Activated CD8-positive, alpha-beta T cell treated with anti-CD3 and anti-CD28 coated beads, Interleukin-2, amount 10 ng/mL, durations not matched to agents 7 days and 5 days (primary cell): ENCODE measurements at regions of chr9 and their contacts with region 1.

Region 1: GRCh38 chr9:19174127-19174912 is 47.0 kb upstream of the PLIN2 start:
- DNase-seq: peak; percentile 52
- ATAC-seq: peak; percentile 87
- H3K4me3 Mint-ChIP-seq: no peak overlapping the region
- H3K27ac Mint-ChIP-seq: peak overlapping the region; percentile 57
- H3K4me1 Mint-ChIP-seq: peaks cover 36% of the 10 kb centered on the region
- H3K27me3 Mint-ChIP-seq: no peaks in the 10 kb centered on the region

Region 2: DNA sequence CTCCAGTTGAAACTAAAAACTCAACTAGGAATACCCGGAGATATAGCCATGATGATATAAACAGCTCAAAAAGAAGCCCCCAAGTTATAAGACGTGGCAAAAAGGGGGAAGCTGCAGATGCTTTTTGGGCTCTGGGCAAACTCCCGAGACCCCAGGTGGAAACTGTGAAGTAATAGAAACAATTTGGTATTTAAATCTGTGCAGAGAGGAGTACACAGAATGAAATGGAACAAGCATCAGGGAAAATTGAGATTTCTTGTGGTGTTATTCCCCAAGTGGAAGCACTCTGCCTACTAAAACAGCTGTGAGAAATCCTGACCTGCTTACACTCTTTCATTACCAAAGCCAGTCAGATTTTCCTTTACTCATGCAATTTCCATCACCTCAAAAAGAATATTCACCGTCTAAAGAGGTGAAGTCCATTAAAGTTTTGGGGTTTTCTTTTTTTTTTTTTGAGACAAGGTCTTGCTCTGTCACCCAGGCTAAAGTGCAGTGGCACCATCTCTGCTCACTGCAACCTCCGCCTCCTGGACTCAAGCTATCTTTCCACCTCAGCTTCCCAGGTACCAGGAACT is 164.8 kb before region 1 on chr9:
- CTCF ChIA-PET with region 1: no interaction called
- POLR2A ChIA-PET with region 1: no interaction called
- DNase-seq: no peak
- ATAC-seq: no peak
- H3K4me3 Mint-ChIP-seq: no peak overlapping the region
- H3K27ac Mint-ChIP-seq: no peak overlapping the region
- H3K4me1 Mint-ChIP-seq: no peaks in the 10 kb centered on the region
- H3K27me3 Mint-ChIP-seq: peaks cover 5% of the 10 kb centered on the region

Region 3: DNA sequence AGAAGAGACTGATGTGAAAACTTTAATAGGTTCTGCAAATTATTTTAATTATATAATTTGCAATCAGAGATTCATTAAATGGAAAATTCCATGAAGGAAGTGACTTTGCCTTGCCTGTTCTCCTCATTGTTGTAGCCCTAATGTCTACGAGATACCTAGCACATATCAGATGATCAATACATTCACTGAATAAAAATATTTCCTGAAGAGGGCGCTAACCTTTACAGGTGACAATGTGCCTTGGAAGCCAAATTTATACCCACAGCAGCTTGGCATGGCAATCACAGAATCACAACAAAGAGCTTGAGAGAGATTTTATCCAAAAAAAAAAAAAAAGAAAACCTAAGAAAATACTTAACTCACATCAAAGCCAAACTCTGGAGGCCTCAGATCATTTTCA is 89.0 kb before region 1 on chr9:
- CTCF ChIA-PET with region 1: interaction called, 41 read pairs
- POLR2A ChIA-PET with region 1: interaction called, 3 read pairs
- DNase-seq: no peak
- ATAC-seq: peak; percentile 80
- H3K4me3 Mint-ChIP-seq: no peak overlapping the region
- H3K27ac Mint-ChIP-seq: no peak overlapping the region
- H3K4me1 Mint-ChIP-seq: no peaks in the 10 kb centered on the region
- H3K27me3 Mint-ChIP-seq: no peaks in the 10 kb centered on the region

Region 4: DNA sequence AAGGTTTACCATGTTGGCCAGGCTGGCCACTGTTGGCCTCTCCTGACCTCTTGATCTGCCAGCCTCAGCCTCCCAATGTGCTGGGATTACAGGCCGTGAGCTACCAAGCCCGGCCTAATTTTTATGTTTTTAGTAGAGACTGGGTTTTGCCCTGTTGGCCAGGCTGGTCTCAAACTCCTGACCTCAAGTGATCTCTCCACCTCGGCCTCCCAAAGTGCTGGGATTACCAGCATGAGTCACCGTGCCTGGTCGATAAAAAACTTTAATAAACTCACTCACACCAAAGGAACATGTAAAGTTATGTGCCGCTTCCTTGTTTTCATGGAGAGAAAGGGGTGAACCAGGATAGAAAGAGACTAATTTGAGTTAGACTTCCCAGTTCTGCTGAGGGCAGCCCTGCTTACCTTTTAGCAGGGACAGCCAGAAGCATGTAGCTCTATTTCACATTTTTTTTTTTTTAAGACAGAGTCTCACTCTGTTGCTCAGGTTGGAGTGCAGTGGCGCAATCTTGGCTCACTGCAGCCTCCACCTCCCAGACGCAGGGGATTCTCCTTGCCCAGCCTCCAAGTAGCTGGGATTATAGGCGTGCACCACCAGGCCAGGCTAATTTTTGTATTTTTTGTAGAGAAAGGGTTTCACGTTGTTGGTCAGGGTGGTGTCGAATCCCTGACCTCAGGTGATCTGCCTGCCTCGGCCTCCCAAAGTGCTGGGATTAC is 60.2 kb before region 1 on chr9:
- CTCF ChIA-PET with region 1: interaction called, 10 read pairs
- POLR2A ChIA-PET with region 1: no interaction called
- DNase-seq: no peak
- ATAC-seq: no peak
- H3K4me3 Mint-ChIP-seq: no peak overlapping the region
- H3K27ac Mint-ChIP-seq: no peak overlapping the region
- H3K4me1 Mint-ChIP-seq: no peaks in the 10 kb centered on the region
- H3K27me3 Mint-ChIP-seq: no peaks in the 10 kb centered on the region

Region 5: GRCh38 chr9:19127881-19128500 is 46.3 kb before region 1 on chr9:
- CTCF ChIA-PET with region 1: interaction called, 25 read pairs
- POLR2A ChIA-PET with region 1: no interaction called
- DNase-seq: peak; percentile 50
- ATAC-seq: peak; percentile 26
- H3K4me3 Mint-ChIP-seq: peak overlapping the region; percentile 94
- H3K27ac Mint-ChIP-seq: peak overlapping the region; percentile 97
- H3K4me1 Mint-ChIP-seq: peaks cover 56% of the 10 kb centered on the region
- H3K27me3 Mint-ChIP-seq: no peaks in the 10 kb centered on the region

Region 6: DNA sequence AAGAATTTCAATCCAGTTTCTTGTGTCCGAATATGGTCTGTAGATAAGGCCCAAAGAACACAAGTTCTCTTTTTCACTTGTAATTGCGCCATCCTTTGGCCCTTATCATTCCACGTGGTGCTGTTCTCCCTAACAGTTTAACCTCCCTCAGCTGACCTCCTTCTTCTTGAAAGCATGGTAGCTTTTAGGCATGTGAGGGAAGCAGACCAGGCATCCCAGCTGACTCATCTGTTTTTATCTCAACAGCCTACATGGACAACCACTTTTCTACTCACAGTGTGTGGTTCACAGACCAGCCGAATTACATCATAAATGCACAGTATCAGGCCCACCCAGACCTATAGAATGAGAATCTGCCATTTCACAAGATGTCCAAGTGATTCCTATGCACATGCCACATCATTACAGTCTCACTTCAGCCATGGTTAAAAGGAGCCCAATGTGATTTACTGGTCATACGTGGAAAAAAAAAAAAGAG is 20.1 kb before region 1 on chr9:
- CTCF ChIA-PET with region 1: interaction called, 21 read pairs
- POLR2A ChIA-PET with region 1: no interaction called
- DNase-seq: no peak
- ATAC-seq: no peak
- H3K4me3 Mint-ChIP-seq: no peak overlapping the region
- H3K27ac Mint-ChIP-seq: no peak overlapping the region
- H3K4me1 Mint-ChIP-seq: peaks cover 14% of the 10 kb centered on the region
- H3K27me3 Mint-ChIP-seq: no peaks in the 10 kb centered on the region

Region 7: GRCh38 chr9:19184144-19184917 is 10.0 kb after region 1 on chr9:
- CTCF ChIA-PET with region 1: interaction called, 38 read pairs
- POLR2A ChIA-PET with region 1: interaction called, 3 read pairs
- DNase-seq: peak; percentile 90
- ATAC-seq: peak; percentile 100
- H3K4me3 Mint-ChIP-seq: peak overlapping the region; percentile 60
- H3K27ac Mint-ChIP-seq: peak overlapping the region; percentile 94
- H3K4me1 Mint-ChIP-seq: peaks cover 27% of the 10 kb centered on the region
- H3K27me3 Mint-ChIP-seq: no peaks in the 10 kb centered on the region

Region 8: GRCh38 chr9:19208695-19209137 is 34.4 kb after region 1 on chr9:
- CTCF ChIA-PET with region 1: no interaction called
- POLR2A ChIA-PET with region 1: no interaction called
- DNase-seq: no peak
- ATAC-seq: no peak
- H3K4me3 Mint-ChIP-seq: no peak overlapping the region
- H3K27ac Mint-ChIP-seq: no peak overlapping the region
- H3K4me1 Mint-ChIP-seq: no peaks in the 10 kb centered on the region
- H3K27me3 Mint-ChIP-seq: peaks cover 5% of the 10 kb centered on the region

Region 9: GRCh38 chr9:19464764-19465585 is 290.7 kb after region 1 on chr9:
- CTCF ChIA-PET with region 1: interaction called, 15 read pairs
- POLR2A ChIA-PET with region 1: no interaction called
- DNase-seq: peak; percentile 76
- ATAC-seq: peak; percentile 95
- H3K4me3 Mint-ChIP-seq: peak overlapping the region; percentile 84
- H3K27ac Mint-ChIP-seq: no peak overlapping the region
- H3K4me1 Mint-ChIP-seq: peaks cover 15% of the 10 kb centered on the region
- H3K27me3 Mint-ChIP-seq: no peaks in the 10 kb centered on the region